Activated CD4-positive, alpha-beta memory T cell treated with anti-CD3 and anti-CD28 coated beads for 36 hours (primary cell): ENCODE measurements at regions of chr6 and their contacts with region 1.

Region 1: DNA sequence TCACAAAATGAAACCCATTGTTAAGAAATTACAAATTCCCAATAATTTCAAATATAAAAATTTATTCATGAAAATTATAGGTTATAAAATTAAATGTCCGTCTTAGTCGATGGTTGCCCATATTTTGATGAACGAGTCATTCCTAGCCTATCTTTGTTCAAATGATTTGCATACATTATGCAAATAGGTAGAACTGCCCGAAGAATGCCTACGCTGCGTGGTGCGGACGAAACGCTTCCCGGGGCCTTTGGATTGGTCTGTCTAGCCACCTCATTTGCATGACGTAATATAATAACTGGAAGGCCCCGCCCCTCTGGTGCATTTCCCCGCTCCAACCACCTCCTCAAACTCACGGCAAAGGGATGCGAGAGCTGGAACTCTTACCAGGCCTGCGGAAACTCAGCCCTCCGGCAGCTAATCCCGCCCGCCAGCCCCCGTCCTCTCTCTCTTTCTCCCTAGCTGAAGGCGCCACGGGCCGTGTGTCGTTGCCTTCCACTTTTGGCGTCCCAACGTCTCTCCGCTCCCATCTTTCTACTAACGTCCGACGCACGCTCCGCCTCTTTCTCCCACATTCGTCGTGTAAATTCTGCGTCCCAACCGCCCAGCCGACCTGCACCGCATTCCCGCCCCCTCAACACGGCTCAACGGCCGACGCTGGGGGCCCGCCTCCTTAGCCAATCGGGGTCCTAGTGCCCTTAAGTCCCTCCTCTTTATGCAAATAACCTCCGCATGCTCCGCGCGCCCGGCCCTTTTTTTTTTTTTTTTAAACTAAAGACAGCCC is 520 bp upstream of the PRRC2A start:
- DNase-seq: peak; percentile 98
- H3K4me3 Mint-ChIP-seq: peak overlapping the region; percentile 91
- H3K27ac Mint-ChIP-seq: peak overlapping the region; percentile 98
- H3K4me1 Mint-ChIP-seq: peaks cover 47% of the 10 kb centered on the region
- H3K27me3 Mint-ChIP-seq: no peaks in the 10 kb centered on the region

Region 2: GRCh38 chr6:31271641-31272357 is 348.2 kb before region 1 on chr6 and contains the start of gene HLA-C:
- CTCF ChIA-PET with region 1: no interaction called
- POLR2A ChIA-PET with region 1: no interaction called
- intact Hi-C with region 1: loop called (anchors 1 kb)
- DNase-seq: peak; percentile 95
- H3K4me3 Mint-ChIP-seq: peak within 1 kb of the TSS; percentile 95
- H3K27ac Mint-ChIP-seq: peak within 1 kb of the TSS; percentile 99
- H3K4me1 Mint-ChIP-seq: peaks cover 51% of the 10 kb centered on the region
- H3K27me3 Mint-ChIP-seq: no peaks in the 10 kb centered on the region
- total RNA-seq, gene HLA-C: 976 to 983 TPM

Region 3: DNA sequence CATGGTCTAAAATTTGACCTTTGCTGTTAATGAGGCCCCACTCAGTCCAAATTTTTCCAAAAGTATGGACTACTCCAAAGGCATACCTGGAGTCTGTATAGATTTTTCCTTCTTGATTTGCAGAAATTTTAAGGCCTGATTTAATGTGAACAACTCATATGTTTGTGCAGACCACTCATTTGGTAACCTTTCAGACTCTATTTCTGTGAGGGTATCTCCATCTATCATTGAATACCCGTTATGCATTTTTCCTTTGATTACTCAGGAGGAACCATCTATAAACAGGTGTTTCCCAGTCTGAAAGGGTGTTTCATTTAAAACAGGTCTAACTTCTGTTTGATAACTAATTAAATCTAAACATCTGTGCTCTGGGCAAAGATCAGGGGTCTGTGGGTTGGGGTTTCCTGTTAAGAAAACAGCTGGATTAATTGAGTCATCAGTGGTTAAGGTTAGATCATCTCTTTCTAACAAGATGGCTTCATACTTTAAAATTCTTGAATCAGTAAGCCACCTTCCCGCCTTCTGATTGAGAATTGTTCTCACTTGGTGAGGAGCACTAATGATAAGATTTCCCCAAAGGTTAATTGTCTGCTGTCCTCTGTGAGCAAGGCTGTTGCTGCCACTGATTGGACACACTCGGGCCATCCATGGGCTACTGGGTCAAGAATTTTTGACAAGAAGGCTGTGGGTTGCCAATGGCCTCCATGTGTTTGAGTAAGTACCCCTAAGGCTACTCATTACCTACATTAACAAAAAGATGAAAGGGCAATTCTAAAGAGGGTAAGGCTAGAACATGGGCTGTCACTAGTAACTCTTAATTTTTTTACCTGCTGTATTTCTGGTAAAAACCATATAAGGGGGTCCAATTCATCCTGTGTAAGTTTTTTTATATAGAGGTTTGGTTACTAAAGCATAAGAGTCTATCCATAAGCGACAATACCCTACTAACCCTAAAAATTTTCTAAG is 287.1 kb before region 1 on chr6:
- CTCF ChIA-PET with region 1: no interaction called
- POLR2A ChIA-PET with region 1: no interaction called
- intact Hi-C with region 1: loop called (anchors 10 kb)
- DNase-seq: peak; percentile 39
- H3K4me3 Mint-ChIP-seq: no peak overlapping the region
- H3K27ac Mint-ChIP-seq: peak overlapping the region; percentile 60
- H3K4me1 Mint-ChIP-seq: peaks cover 16% of the 10 kb centered on the region
- H3K27me3 Mint-ChIP-seq: no peaks in the 10 kb centered on the region

Region 4: DNA sequence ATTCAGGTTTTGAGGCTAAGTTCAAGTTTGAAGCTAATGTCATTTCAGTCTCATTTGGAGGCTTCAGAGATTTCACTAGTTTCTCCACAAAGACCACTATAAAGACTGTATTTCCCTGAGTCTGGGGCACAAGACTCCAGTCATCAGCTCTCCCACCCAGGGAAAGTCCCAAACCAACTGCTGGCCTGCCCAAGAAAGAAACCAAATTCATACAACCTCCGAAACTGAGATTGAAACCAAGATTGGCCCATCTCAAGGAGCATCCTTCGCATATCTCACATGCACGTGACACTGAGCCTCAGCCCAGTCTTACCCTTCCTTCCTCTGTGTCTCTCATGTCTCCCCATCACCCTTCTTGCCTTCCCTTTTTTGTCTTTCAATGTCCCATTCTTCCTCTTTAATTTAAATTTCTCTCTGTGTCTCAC is 51.4 kb before region 1 on chr6:
- CTCF ChIA-PET with region 1: no interaction called
- POLR2A ChIA-PET with region 1: no interaction called
- intact Hi-C with region 1: loop called (anchors 2 kb)
- DNase-seq: peak; percentile 86
- H3K4me3 Mint-ChIP-seq: peak overlapping the region; percentile 35
- H3K27ac Mint-ChIP-seq: peak overlapping the region; percentile 72
- H3K4me1 Mint-ChIP-seq: peaks cover 72% of the 10 kb centered on the region
- H3K27me3 Mint-ChIP-seq: no peaks in the 10 kb centered on the region

Region 5: GRCh38 chr6:31652925-31653718 is 33.1 kb after region 1 on chr6:
- CTCF ChIA-PET with region 1: no interaction called
- POLR2A ChIA-PET with region 1: interaction called, 26 read pairs
- intact Hi-C with region 1: loop called (anchors 1 kb)
- DNase-seq: peak; percentile 92
- H3K4me3 Mint-ChIP-seq: peak overlapping the region; percentile 94
- H3K27ac Mint-ChIP-seq: peak overlapping the region; percentile 99
- H3K4me1 Mint-ChIP-seq: peaks cover 54% of the 10 kb centered on the region
- H3K27me3 Mint-ChIP-seq: no peaks in the 10 kb centered on the region